ENCODE measurements at regions of chr14 and their contacts with region 1.

Region 1: DNA sequence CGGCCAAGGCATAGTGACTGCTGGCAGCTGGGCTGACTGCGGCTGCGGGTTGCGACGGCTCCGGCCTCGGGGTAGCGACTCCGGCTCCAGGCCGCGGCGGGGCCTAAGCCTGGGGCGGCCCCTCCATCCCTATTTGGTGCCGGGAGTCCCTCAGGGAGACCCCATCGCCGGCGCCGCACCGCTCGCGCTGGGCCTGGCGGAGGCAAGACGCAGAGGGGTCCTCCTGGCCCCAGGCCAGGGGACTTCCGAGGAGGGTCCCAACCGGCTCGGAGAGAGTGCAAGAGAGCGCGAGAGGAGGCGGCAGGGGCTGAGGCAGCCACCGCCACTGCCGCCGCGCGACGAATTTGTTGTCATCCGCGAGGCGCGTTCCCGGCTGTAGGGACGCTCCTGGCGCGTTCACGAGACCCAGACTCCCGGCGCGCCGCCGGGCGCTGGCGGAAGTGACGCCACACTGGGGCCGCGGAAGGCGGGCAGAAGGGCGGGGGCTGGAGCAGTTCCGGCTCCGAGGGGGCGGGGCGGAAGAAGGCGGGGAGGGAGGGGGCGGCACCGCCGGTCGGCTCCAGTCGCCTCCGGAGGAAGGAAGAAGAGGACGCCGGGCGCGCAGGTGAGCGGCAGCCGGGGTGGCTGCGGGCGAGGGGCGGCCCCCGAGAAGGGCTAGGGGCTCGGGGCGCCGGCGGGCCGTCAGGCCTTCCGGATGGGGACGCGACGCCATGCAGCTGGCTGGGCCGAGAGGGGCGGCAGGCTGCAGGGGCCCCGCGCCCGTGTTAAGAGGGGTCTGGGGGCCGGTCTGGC is at the starts of genes ATG2B and GSKIP:
- DNase-seq: peak; percentile 98 to 99
- ATAC-seq: peak; percentile 82 to 96 (median 87)
- H3K4me3 ChIP-seq: peak within 1 kb of the TSS; percentile 88
- H3K4me3 Mint-ChIP-seq: peak within 1 kb of the TSS; percentile 91
- H3K27ac ChIP-seq: peak within 1 kb of the TSS; percentile 92
- H3K27ac Mint-ChIP-seq: peak within 1 kb of the TSS; percentile 83 to 93
- H3K4me1 ChIP-seq: peaks cover 24% of the 10 kb centered on the region
- H3K4me1 Mint-ChIP-seq: peaks cover 35 to 45% of the 10 kb centered on the region in 2 donors
- H3K27me3 ChIP-seq: no peaks in the 10 kb centered on the region
- H3K27me3 Mint-ChIP-seq: no peaks in the 10 kb centered on the region
- CTCF ChIP-seq: no peak
- total RNA-seq, gene ATG2B: 34.8 to 45.6 (median 35.8) TPM
- total RNA-seq, gene GSKIP: 6.6 to 11.8 (median 7.9) TPM

Region 2: DNA sequence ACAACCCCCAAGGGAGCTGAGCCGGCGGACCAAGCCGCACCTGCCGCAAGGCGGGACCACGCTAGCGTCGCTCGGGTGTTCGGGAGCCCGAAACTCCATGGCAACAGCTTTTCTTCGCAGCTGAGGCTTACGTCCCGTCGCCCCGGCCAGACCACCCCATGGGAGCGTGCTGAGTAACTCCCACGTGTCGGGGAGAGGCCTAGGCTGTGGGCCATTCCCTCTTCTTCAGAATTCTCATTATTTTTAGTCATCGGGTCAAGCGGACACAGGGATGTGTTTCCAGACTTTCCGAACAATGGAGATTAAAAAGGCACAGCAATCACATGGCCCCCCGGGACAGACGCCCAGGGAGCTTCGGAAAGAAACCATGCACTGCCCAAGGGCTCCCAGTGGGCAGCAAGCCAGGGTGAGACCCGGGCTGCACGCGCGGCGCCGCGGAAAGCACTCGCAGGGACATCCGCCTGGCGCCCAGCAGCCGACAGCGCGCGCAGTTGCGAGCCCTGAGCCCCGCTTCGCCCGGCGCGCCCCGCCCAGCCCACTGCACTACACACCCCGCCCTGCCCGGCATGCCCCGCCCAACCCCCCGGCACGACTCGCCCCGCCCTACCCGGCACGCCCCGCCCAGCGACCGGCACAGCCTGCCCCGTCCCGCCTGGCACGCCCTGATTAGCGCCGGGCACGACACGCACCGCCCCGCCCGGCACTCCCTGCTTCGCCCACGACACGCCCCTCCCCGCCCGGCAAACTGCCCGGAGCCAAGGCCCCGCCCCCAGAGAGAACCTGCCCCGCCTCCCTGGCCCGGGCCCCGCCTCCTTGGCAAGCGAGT is 28.3 kb after region 1 on chr14:
- intact Hi-C with region 1: loop called (anchors 1 kb)
- DNase-seq: peak; percentile 98 to 100
- ATAC-seq: peak; percentile 93 to 99 (median 93)
- H3K4me3 ChIP-seq: peak overlapping the region; percentile 89
- H3K4me3 Mint-ChIP-seq: peak overlapping the region; percentile 93
- H3K27ac ChIP-seq: peak overlapping the region; percentile 43
- H3K27ac Mint-ChIP-seq: peak overlapping the region; percentile 64 to 81
- H3K4me1 ChIP-seq: peaks cover 16% of the 10 kb centered on the region
- H3K4me1 Mint-ChIP-seq: peaks cover 7 to 9% of the 10 kb centered on the region in 2 donors
- H3K27me3 ChIP-seq: peaks cover 2% of the 10 kb centered on the region
- H3K27me3 Mint-ChIP-seq: peaks cover 3 to 9% of the 10 kb centered on the region in 2 donors
- CTCF ChIP-seq: no peak

Region 3: GRCh38 chr14:97248973-97249372 is 885.8 kb after region 1 on chr14:
- intact Hi-C with region 1: no loop called
- DNase-seq: no peak
- ATAC-seq: no peak
- H3K4me3 ChIP-seq: no peak overlapping the region
- H3K4me3 Mint-ChIP-seq: no peak overlapping the region
- H3K27ac ChIP-seq: no peak overlapping the region
- H3K27ac Mint-ChIP-seq: no peak overlapping the region
- H3K4me1 ChIP-seq: peaks cover 9% of the 10 kb centered on the region
- H3K4me1 Mint-ChIP-seq: peaks cover 27 to 30% of the 10 kb centered on the region in 2 donors
- H3K27me3 ChIP-seq: no peaks in the 10 kb centered on the region
- H3K27me3 Mint-ChIP-seq: peaks cover 12 to 16% of the 10 kb centered on the region in 2 donors
- CTCF ChIP-seq: no peak

Measured in natural killer cell (primary cell).